ENCODE measurements at regions of chr19 and their contacts with region 1.

Region 1: GRCh38 chr19:41993612-41994483 is at the start of gene ATP1A3:
- DNase-seq: peak; percentile 74
- ATAC-seq: peak; percentile 78
- H3K4me3 Mint-ChIP-seq: peak within 1 kb of the TSS; percentile 71
- H3K27ac Mint-ChIP-seq: no peak within 1 kb of the TSS
- H3K4me1 Mint-ChIP-seq: peaks cover 26% of the 10 kb centered on the region
- H3K27me3 Mint-ChIP-seq: peaks cover 35% of the 10 kb centered on the region
- total RNA-seq, gene ATP1A3: 1.8 TPM

Region 2: GRCh38 chr19:41959056-41960053 is 34.5 kb before region 1 on chr19 and contains the start of gene RABAC1:
- CTCF ChIA-PET with region 1: no interaction called
- POLR2A ChIA-PET with region 1: no interaction called
- intact Hi-C with region 1: loop called in 1 of 2 experiments (anchors 1 kb)
- DNase-seq: peak; percentile 94
- ATAC-seq: peak; percentile 88
- H3K4me3 Mint-ChIP-seq: peak within 1 kb of the TSS; percentile 81
- H3K27ac Mint-ChIP-seq: peak within 1 kb of the TSS; percentile 87
- H3K4me1 Mint-ChIP-seq: peaks cover 16% of the 10 kb centered on the region
- H3K27me3 Mint-ChIP-seq: no peaks in the 10 kb centered on the region
- total RNA-seq, gene RABAC1: 35.3 to 49.7 TPM

Region 3: GRCh38 chr19:42048992-42049391 is 55.1 kb after region 1 on chr19:
- CTCF ChIA-PET with region 1: no interaction called
- POLR2A ChIA-PET with region 1: no interaction called
- intact Hi-C with region 1: loop called in 1 of 2 experiments (anchors 5 kb)
- DNase-seq: peak; percentile 34
- ATAC-seq: peak; percentile 9
- H3K4me3 Mint-ChIP-seq: no peak overlapping the region
- H3K27ac Mint-ChIP-seq: peak overlapping the region; percentile 35
- H3K4me1 Mint-ChIP-seq: peaks cover 21% of the 10 kb centered on the region
- H3K27me3 Mint-ChIP-seq: peaks cover 2% of the 10 kb centered on the region

Region 4: DNA sequence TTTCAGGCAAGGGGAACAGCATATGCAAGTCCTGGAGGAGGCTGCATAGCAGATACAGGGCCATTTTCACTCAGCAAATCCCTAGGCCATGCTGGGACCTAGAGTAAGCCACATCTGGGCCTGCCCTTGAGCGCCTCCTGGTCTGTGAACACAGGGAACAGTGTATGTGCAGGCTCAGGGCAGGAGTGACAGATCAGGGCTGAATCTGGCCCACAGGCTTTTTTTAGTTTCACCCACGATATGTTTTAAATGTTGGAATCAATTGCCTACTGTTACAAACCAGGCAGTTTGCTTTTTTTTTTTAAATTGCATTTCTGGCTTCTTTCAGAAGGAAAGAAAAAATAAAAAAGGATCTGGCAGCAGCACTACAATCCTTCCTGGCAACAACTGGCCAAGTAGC is 317.8 kb after region 1 on chr19:
- CTCF ChIA-PET with region 1: no interaction called
- POLR2A ChIA-PET with region 1: no interaction called
- intact Hi-C with region 1: no loop called
- DNase-seq: no peak
- ATAC-seq: no peak
- H3K4me3 Mint-ChIP-seq: no peak overlapping the region
- H3K27ac Mint-ChIP-seq: no peak overlapping the region
- H3K4me1 Mint-ChIP-seq: peaks cover 9% of the 10 kb centered on the region
- H3K27me3 Mint-ChIP-seq: peaks cover 28% of the 10 kb centered on the region

Measured in activated CD4-positive, alpha-beta T cell treated with anti-CD3 and anti-CD28 coated beads for 36 hours (primary cell).